ENCODE measurements at regions of chr16 and their contacts with region 1.

Region 1: GRCh38 chr16:55257966-55258613 is 65.9 kb upstream of the IRX6 start:
- DNase-seq: peak; percentile 41
- ATAC-seq: peak; percentile 97
- H3K4me3 ChIP-seq: no peak overlapping the region
- H3K27ac ChIP-seq: no peak overlapping the region
- H3K4me1 ChIP-seq: no peaks in the 10 kb centered on the region
- H3K27me3 ChIP-seq: no peaks in the 10 kb centered on the region; a peak in 2 of 5 replicates
- CTCF ChIP-seq: peak; percentile 78
- EP300 ChIP-seq: no peak
- POLR2A ChIP-seq: no peak
- RAD21 ChIP-seq: peak; percentile 84

Region 2: GRCh38 chr16:53892155-53892554 is 1365.9 kb before region 1 on chr16:
- CTCF ChIA-PET with region 1: no interaction called
- POLR2A ChIA-PET with region 1: no interaction called
- in situ Hi-C with region 1: no loop called
- intact Hi-C with region 1: loop called (anchors 5 kb)
- DNase-seq: peak; percentile 61
- ATAC-seq: peak; percentile 87
- H3K4me3 ChIP-seq: no peak overlapping the region
- H3K27ac ChIP-seq: no peak overlapping the region
- H3K4me1 ChIP-seq: peaks cover 26% of the 10 kb centered on the region
- H3K27me3 ChIP-seq: no peaks in the 10 kb centered on the region
- CTCF ChIP-seq: peak; percentile 87
- EP300 ChIP-seq: 0 out of 4 replicates have a peak, but pooled peaks of 1 of the 2 experiments have one; percentile 38
- POLR2A ChIP-seq: no peak
- RAD21 ChIP-seq: peak; percentile 77

Region 3: DNA sequence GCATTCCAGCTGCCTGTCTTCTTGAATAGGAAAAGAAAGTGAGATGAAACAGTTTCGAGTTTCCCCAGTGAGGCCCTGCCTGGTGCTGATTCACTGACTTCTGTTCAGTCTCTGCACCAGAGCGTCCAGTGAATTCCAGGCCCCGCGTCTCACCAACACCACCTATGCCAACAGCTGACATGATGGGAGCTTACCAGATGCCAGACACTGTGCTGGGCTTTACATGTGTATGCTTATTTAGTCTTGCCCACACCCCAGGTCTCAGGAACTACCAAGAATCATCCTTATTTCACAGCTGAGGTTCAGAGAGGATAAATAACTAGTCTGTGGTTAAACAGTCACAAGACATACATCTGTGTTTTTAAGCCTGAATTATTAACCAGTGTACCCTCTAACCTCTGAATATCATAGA is 36.8 kb after region 1 on chr16:
- CTCF ChIA-PET with region 1: no interaction called
- POLR2A ChIA-PET with region 1: no interaction called
- in situ Hi-C with region 1: no loop called
- intact Hi-C with region 1: no loop called
- DNase-seq: no peak
- ATAC-seq: no peak
- H3K4me3 ChIP-seq: no peak overlapping the region
- H3K27ac ChIP-seq: no peak overlapping the region
- H3K4me1 ChIP-seq: no peaks in the 10 kb centered on the region
- H3K27me3 ChIP-seq: no peaks in the 10 kb centered on the region
- CTCF ChIP-seq: no peak
- EP300 ChIP-seq: no peak
- POLR2A ChIP-seq: no peak
- RAD21 ChIP-seq: no peak

Measured in HepG2 (cell line).